ENCODE measurements at regions of chr11 and their contacts with region 1.

Region 1: GRCh38 chr11:117946842-117947526 is 17.8 kb upstream of the TMPRSS13 start:
- DNase-seq: peak; percentile 73 to 81
- ATAC-seq: peak; percentile 96 to 100
- H3K4me3 ChIP-seq: no peak overlapping the region
- H3K27ac ChIP-seq: peak overlapping the region in 1 of 2 experiments; percentile 63; a peak in 1 of 6 replicates
- H3K4me1 ChIP-seq: peaks cover 3% of the 10 kb centered on the region; the same call in 1 of the 3 replicates
- CTCF ChIP-seq: peak; percentile 81
- EP300 ChIP-seq: no peak
- POLR2A ChIP-seq: no peak
- RAD21 ChIP-seq: peak; percentile 89 to 90

Region 2: DNA sequence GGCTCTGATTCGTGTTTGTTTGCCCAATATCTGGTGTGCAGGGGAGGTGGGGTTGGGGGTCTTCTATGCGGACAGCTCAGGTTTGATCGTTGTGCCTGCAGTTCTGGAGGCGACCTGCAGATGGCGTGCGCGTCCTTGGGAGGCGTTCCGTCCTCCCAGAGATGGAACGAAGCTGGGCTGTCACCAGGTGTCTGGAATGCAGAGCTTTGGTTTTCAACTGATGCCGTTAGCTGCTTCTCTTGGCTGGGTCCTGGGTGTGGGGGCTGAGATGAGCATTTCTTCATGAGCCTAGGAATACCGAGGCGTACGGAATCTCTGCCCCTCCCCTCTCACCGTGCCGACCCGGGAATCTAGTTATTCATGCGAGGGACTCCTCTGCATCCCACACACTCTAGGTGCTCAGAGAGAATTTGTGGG is 520.7 kb before region 1 on chr11:
- CTCF ChIA-PET with region 1: interaction called, 17 read pairs
- POLR2A ChIA-PET with region 1: no interaction called
- DNase-seq: peak; percentile 37 to 44
- ATAC-seq: peak in 1 of 2 experiments; percentile 88; a peak in 3 of 6 replicates
- H3K4me3 ChIP-seq: no peak overlapping the region
- H3K27ac ChIP-seq: no peak overlapping the region
- H3K4me1 ChIP-seq: no peaks in the 10 kb centered on the region
- CTCF ChIP-seq: peak; percentile 70
- EP300 ChIP-seq: no peak
- POLR2A ChIP-seq: no peak
- RAD21 ChIP-seq: peak; percentile 78 to 89

Region 3: GRCh38 chr11:117807482-117808327 is 139.3 kb before region 1 on chr11:
- CTCF ChIA-PET with region 1: interaction called, 82 read pairs
- POLR2A ChIA-PET with region 1: no interaction called
- DNase-seq: peak; percentile 48 to 54
- ATAC-seq: peak in 1 of 2 experiments; percentile 57; a peak in 3 of 6 replicates
- H3K4me3 ChIP-seq: no peak overlapping the region
- H3K27ac ChIP-seq: no peak overlapping the region; a peak in 1 of 6 replicates
- H3K4me1 ChIP-seq: peaks cover 13% of the 10 kb centered on the region; the same call in 2 of the 3 replicates
- CTCF ChIP-seq: peak; percentile 71
- EP300 ChIP-seq: no peak
- POLR2A ChIP-seq: no peak
- RAD21 ChIP-seq: peak; percentile 71 to 76

Region 4: DNA sequence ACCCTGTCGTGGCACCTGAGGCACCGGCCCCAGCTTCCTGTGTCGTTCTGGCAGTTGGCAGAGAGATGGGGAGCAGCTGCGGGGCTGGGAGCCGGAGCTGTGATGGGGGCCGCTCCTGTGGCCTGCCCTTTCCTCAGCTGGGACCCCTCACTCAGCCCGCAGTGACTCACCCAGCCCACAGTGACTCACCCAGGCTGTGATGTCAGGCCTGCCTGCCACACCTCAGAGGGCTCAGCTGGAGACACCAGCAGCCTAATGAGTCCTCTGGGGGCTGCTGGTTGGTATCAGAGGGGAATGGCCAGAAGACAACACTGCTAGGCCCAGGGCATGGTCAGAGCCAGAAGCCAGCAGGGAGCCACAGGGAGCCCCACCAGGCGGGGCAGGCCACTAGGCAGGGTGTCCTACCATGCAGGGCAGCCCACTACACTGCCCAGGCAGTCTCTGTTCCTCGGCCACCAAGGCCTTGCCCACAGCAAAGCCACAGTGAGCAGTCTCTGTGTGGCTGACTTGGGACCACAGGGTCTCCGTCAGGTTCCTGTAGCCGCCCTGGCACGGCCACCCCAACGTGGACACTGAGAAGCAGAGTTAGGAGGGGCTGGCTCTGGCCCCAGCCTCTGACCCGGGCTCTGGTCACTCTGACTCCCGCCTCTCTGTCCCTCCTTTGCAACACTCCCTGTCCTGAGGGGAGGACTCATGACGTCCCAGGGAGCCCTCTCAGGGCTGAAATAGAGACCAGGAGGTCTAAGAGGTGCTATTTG is 118.2 kb before region 1 on chr11:
- CTCF ChIA-PET with region 1: interaction called, 113 read pairs
- POLR2A ChIA-PET with region 1: no interaction called
- DNase-seq: peak; percentile 29 to 30
- ATAC-seq: peak; percentile 69 to 71
- H3K4me3 ChIP-seq: no peak overlapping the region
- H3K27ac ChIP-seq: peak overlapping the region; percentile 62 to 80; a peak in 5 of 6 replicates
- H3K4me1 ChIP-seq: peaks cover 60% of the 10 kb centered on the region
- CTCF ChIP-seq: no peak
- EP300 ChIP-seq: no peak
- POLR2A ChIP-seq: no peak
- RAD21 ChIP-seq: no peak

Region 5: DNA sequence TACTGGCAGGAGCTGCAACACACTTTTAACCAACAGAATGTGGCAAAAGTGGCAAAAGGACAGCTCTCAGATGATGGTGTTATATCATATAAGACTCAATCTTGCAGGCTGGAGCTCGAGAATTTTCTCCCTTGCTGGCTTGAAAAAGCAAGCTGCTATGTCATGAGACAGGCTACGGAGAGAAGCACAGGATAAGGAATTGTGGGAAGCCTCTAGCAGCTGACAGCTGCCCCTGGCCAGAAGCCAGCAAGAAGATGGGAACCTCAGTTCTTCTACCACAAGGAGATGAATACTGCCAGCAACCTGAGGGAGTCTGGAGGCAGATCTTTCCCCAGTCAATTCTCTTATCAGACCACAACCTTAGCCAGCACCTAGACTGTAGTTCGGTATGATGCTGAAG is 95.1 kb before region 1 on chr11:
- CTCF ChIA-PET with region 1: interaction called, 192 read pairs
- POLR2A ChIA-PET with region 1: no interaction called
- DNase-seq: no peak
- ATAC-seq: no peak
- H3K4me3 ChIP-seq: no peak overlapping the region
- H3K27ac ChIP-seq: no peak overlapping the region
- H3K4me1 ChIP-seq: no peaks in the 10 kb centered on the region
- CTCF ChIP-seq: no peak
- EP300 ChIP-seq: no peak
- POLR2A ChIP-seq: no peak
- RAD21 ChIP-seq: no peak

Region 6: DNA sequence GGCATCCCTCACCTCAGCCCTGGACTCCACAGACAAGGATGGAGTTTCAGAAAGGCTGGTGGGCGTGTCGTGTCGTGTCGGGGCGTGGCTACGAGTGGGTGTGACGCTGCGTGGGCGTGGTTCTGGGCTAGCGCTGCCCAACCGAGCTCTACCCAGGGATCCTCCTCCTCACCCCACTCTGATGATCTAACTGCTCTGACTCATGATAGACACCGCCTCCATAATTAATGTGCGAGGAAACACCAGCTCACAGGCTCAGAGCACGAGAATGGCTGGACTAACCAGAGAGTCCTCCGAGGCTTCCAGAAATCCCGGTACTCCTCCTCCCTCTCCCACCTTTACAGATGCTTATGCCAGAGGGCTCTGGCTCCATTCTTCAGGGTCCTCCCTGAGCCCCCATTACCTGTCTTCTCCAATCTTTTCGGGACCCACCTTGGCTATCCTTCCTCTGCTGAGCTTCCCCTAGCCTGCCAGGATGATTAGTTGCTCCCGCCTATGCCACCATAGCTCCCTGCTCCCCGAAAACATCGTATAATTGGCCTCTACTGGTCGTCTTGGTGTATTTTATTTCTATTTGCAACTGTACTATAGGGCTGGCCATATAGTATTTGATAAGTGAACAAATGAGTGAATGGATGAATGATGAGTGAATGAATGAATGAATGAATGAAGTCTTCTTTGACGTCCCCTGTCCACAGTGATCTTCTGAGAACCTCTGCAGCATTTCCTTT is 39.6 kb before region 1 on chr11:
- CTCF ChIA-PET with region 1: interaction called, 10 read pairs
- POLR2A ChIA-PET with region 1: no interaction called
- DNase-seq: peak; percentile 65 to 83
- ATAC-seq: peak; percentile 95 to 97
- H3K4me3 ChIP-seq: 0 out of 3 replicates have a peak overlapping the region, but pooled peaks have one; percentile 11
- H3K27ac ChIP-seq: peak overlapping the region; percentile 32 to 66; a peak in 4 of 6 replicates
- H3K4me1 ChIP-seq: 0 out of 3 replicates have a peak, but pooled peaks cover 4% of the 10 kb centered on the region
- CTCF ChIP-seq: no peak
- EP300 ChIP-seq: no peak
- POLR2A ChIP-seq: no peak
- RAD21 ChIP-seq: no peak

Region 7: GRCh38 chr11:117932067-117932370 is 15.0 kb before region 1 on chr11:
- CTCF ChIA-PET with region 1: interaction called, 34 read pairs
- POLR2A ChIA-PET with region 1: no interaction called
- DNase-seq: no peak
- ATAC-seq: no peak
- H3K4me3 ChIP-seq: no peak overlapping the region
- H3K27ac ChIP-seq: no peak overlapping the region
- H3K4me1 ChIP-seq: no peaks in the 10 kb centered on the region
- CTCF ChIP-seq: no peak
- EP300 ChIP-seq: no peak
- POLR2A ChIP-seq: no peak
- RAD21 ChIP-seq: no peak